ENCODE measurements at regions of chr10 and their contacts with region 1.

Region 1: DNA sequence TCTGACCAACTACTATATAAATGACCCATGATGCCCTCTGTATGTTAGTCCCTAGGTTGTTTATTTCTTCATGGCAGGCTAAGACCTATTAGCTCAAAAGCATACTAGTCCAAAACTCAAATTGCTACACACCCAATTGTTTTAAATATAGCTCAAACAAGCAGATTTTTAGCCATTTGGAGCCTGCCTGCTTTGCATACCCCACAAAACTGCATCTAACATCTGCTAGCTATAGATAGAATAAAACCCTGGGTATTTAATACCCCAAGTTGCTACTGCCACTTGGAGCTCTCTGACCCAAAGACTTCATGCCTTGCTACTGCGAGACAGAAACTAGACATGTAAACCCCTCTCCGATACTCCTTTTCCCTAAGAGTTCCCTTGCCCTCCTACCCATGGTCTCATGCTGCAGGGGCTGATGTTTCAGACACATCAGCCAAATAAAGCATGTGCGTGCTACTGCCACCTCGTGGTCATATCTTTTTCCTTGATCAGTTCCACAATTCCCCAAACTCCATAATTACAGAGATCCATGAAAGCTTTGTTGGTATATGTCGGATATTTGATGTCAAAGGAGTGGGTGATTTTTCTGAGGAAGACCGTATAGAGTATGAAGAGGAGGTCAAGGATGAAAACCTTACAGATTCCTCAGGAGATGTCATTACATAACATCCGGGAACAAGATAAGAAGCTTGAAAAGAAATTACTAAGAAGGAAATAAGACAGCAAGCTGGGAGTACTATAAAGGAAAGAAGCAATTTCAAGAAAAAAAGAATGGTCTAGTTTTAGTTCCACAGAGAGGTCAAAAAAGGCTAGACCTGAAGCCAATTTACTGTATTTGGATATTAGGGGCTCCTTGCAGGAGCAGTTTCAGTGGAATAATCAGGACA is 386.6 kb downstream of the SH2D4B start:
- DNase-seq: peak; percentile 72
- H3K4me3 ChIP-seq: no peak overlapping the region
- H3K27ac ChIP-seq: no peak overlapping the region
- H3K4me1 ChIP-seq: no peaks in the 10 kb centered on the region
- H3K27me3 ChIP-seq: no peaks in the 10 kb centered on the region
- CTCF ChIP-seq: peak; percentile 39 to 71 (median 57)
- POLR2A ChIP-seq: no peak

Region 2: GRCh38 chr10:80662577-80663261 is 261.6 kb before region 1 on chr10:
- intact Hi-C with region 1: loop called (anchors 10 kb)
- DNase-seq: peak; percentile 92
- H3K4me3 ChIP-seq: peak overlapping the region; percentile 39 to 40
- H3K27ac ChIP-seq: peak overlapping the region; percentile 61 to 75
- H3K4me1 ChIP-seq: peaks cover 22% of the 10 kb centered on the region
- H3K27me3 ChIP-seq: no peaks in the 10 kb centered on the region
- CTCF ChIP-seq: peak; percentile 86 to 98 (median 92)
- POLR2A ChIP-seq: no peak

Region 3: DNA sequence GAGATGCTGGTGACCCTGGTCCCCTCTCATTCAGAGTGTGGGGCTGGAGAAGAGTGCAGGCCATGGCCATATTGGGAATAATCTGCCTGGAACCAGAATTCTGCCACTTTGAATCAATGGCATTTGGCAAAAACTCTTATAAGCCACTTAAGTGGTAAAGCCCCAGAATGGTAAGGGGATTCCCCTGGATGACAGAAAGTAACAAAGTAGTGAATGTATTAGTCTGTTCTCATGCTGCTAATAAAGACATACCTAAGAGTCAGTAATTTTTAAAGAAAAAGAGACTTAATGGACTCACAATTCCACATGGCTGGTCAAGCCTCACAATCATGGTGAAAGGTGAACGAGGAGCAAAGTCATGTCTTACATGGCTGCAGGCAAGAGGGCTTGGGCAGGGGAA is 138.0 kb before region 1 on chr10:
- intact Hi-C with region 1: no loop called
- DNase-seq: no peak
- H3K4me3 ChIP-seq: no peak overlapping the region
- H3K27ac ChIP-seq: no peak overlapping the region
- H3K4me1 ChIP-seq: no peaks in the 10 kb centered on the region
- H3K27me3 ChIP-seq: no peaks in the 10 kb centered on the region
- CTCF ChIP-seq: no peak
- POLR2A ChIP-seq: no peak